Posterior vena cava (tissue), 2 donors: ENCODE measurements at regions of chr18 and their contacts with region 1.

Region 1: DNA sequence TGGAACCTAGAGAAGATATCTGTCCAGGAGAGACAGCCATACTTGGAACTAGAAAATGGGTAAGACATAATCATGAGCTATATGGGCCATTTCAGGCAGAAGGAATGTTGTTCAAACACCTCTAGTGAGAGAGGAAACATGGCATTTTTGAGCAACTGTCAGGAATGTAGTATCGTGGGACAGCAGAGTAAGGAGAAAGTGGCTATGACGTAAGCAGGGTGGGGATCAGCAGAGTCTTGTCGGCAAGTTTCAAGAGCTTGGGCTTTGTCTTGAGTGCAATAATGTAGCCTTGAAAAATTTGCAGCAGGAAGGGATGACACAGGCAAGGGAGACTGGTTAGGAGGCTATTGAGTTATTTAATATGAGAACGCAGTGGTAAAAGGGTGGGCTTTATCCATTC is 20.4 kb downstream of the SERPINB7 start:
- DNase-seq: no peak

Region 2: DNA sequence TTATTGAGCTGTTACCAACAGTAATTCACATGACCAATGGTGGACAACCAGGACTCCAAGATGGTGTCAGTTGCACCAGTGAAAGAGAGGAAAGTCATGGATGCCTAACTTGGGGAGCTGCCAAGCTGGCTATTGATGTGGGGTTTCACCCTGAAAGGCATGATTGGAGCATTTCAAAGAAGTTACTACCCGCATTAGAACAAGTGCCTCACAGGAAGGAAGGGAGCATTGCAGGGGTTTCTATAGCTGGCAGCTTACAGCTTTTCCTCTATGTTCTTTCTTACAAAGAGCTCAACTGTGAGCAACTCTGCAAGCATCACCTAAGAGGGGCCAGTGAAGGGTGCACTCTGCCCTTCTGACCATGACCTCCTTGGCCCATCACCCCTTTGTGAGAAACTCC is 1377.4 kb before region 1 on chr18:
- intact Hi-C with region 1: loop called in 1 of 2 experiments (anchors 10 kb)
- DNase-seq: no peak

Region 3: GRCh38 chr18:63730773-63731172 is 64.8 kb before region 1 on chr18:
- intact Hi-C with region 1: no loop called
- DNase-seq: no peak